ENCODE measurements at regions of chr3 and their contacts with region 1.

Region 1: DNA sequence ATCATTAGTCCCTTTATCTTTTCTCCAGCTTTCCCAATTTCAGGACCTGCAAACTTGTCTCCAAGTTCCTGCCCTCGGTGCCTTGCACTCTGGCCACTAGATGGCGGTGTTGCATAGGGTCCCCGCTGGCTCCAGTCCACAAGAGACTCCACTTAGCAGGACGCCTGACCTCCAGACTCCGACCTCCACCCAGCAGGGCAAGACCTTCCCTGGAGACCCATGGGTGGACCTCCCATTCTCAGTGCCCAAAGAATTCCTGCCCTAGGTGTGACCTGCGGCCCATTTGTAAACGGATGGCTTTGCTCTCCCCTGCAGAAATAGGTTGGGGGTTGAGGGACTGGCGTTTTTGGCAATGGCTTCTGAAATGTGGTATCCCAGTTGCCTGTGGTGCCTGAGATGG is 82.6 kb downstream of the LSM3 start:
- DNase-seq: peak; percentile 61 to 83
- H3K4me3 ChIP-seq: no peak overlapping the region
- H3K27ac ChIP-seq: no peak overlapping the region
- H3K4me1 ChIP-seq: peaks cover 44% of the 10 kb centered on the region
- H3K27me3 ChIP-seq: no peaks in the 10 kb centered on the region
- CTCF ChIP-seq: peak; percentile 99

Region 2: GRCh38 chr3:13895155-13896105 is 365.8 kb before region 1 on chr3:
- CTCF ChIA-PET with region 1: no interaction called
- POLR2A ChIA-PET with region 1: no interaction called
- intact Hi-C with region 1: loop called (anchors 1 kb)
- DNase-seq: peak; percentile 75 to 95
- H3K4me3 ChIP-seq: peak overlapping the region; percentile 96
- H3K27ac ChIP-seq: no peak overlapping the region
- H3K4me1 ChIP-seq: peaks cover 17% of the 10 kb centered on the region
- H3K27me3 ChIP-seq: no peaks in the 10 kb centered on the region
- CTCF ChIP-seq: no peak

Region 3: GRCh38 chr3:14216257-14217048 is 44.8 kb before region 1 on chr3:
- CTCF ChIA-PET with region 1: interaction called, 3 read pairs
- POLR2A ChIA-PET with region 1: interaction called, 4 read pairs
- intact Hi-C with region 1: loop called (anchors 2 kb)
- DNase-seq: peak; percentile 56 to 76
- H3K4me3 ChIP-seq: peak overlapping the region; percentile 15; the same call in 1 of the 2 replicates
- H3K27ac ChIP-seq: no peak overlapping the region
- H3K4me1 ChIP-seq: 0 out of 2 replicates have a peak, but pooled peaks cover 2% of the 10 kb centered on the region
- H3K27me3 ChIP-seq: no peaks in the 10 kb centered on the region
- CTCF ChIP-seq: peak; percentile 37; the same call in 1 of the 2 replicates

Region 4: DNA sequence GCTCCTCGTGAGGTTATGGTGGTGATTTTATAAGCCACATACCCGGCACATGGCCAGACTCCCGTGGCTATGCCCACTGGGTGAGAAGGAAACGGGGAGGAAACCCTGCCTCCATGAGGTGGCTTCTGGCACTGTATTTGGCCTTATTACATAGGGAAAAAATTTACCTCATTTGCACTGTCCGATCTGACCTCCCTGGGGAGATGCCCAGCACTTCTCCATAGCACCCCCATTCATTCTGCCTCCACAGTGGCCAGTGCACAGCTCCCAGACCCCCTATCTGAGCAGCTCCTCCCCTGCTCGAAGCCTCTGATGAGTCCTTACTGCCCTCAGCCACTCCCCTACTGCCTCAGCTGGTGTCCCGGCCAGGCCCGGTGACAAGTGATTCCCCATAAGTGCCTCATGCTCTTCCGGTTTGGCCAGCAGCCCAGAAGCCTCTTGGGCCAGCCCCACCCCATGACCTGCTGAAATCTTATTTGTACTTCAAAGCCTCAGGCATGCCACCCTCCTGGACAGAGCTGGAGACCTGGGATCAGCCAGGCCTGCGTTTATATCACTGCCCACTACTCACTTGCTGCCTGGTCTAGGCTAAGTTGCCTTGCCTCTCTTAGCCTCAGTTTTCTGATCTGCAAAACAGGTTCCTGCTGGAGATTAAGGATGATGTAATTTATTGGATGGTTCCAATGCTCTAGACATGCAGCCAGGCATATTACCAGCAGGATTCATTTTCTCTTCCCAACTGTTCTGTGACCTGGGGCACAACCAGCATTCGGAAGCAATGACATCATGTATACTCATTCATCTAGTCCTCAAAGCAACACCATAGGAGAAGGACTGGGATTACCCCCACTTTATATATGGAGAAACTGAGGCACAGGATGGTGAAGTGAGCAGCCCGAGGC is 110.6 kb after region 1 on chr3:
- CTCF ChIA-PET with region 1: no interaction called
- POLR2A ChIA-PET with region 1: no interaction called
- intact Hi-C with region 1: loop called (anchors 1 kb)
- DNase-seq: peak; percentile 90 to 93
- H3K4me3 ChIP-seq: no peak overlapping the region
- H3K27ac ChIP-seq: peak overlapping the region; percentile 62
- H3K4me1 ChIP-seq: peaks cover 54% of the 10 kb centered on the region
- H3K27me3 ChIP-seq: no peaks in the 10 kb centered on the region
- CTCF ChIP-seq: no peak; the same call in 1 of the 2 replicates

Region 5: DNA sequence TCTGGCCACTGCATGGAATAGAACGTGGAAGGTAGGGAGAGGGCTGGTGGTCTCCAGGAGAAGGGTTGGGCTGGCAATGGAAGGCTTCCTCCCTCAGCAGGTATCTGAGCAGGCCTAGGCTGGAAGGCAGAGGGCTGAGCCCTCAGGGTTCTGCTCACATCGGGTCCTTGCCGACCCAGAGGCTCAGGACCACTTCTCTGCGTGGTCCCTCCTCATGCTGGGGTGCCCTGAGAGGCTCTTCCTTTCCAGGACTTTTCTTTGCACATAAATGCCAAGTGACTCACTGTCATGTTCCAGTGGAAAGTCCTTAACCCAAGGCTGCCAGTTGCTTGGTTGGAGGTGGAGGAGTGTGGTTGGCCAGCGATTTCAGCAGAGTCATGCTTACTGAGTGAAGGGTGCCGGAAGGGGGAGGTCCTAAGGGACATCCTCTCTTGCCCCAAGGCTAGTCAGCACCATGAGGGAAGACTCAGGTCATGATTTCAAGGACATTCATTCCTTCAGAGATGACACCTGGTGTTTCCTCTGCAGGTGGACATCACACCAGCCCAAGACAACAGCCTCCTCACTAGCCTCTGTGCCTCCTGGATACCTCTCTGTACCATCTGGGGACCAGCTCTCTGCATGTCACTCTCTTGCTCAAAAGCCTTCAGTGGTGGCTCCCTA is 149.4 kb after region 1 on chr3:
- CTCF ChIA-PET with region 1: no interaction called
- POLR2A ChIA-PET with region 1: no interaction called
- intact Hi-C with region 1: loop called (anchors 1 kb)
- DNase-seq: peak; percentile 90 to 93
- H3K4me3 ChIP-seq: peak overlapping the region; percentile 32; the same call in 1 of the 2 replicates
- H3K27ac ChIP-seq: peak overlapping the region; percentile 99
- H3K4me1 ChIP-seq: peaks cover 99% of the 10 kb centered on the region
- H3K27me3 ChIP-seq: no peaks in the 10 kb centered on the region
- CTCF ChIP-seq: no peak

Region 6: DNA sequence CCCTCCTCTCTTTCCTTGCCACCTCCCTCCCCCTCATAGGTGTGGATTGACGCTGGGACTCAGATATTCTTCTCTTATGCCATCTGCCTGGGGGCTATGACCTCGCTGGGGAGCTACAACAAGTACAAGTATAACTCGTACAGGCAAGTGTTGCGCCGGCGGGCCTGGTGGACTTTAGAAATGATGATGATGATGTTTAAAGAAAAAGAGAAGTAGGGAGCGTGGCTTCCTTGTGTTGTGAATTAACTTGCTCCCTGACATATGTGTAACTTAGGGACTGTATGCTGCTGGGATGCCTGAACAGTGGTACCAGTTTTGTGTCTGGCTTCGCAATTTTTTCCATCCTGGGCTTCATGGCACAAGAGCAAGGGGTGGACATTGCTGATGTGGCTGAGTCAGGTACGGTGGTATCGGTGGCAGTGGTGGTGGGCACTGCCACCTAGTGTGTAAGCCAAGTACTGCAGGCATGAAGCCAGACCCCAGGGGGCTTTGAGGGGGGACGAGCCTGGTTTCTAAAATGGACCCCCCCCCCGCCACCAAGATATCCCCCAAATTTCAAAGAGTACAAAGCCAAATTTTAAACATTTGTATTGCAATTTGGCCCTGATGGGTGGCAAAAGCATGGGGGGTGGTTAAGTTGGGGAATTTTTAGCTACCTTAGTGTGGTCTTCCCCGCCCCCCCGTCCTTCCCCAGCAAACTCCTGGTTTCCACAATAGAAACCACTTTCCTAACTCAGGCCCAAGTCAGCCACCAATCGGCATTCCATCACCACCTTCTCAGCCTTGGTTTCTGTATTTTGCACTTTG is 206.8 kb after region 1 on chr3:
- CTCF ChIA-PET with region 1: interaction called, 3 read pairs
- POLR2A ChIA-PET with region 1: no interaction called
- intact Hi-C with region 1: loop called (anchors 1 kb)
- DNase-seq: no peak
- H3K4me3 ChIP-seq: no peak overlapping the region
- H3K27ac ChIP-seq: no peak overlapping the region
- H3K4me1 ChIP-seq: peaks cover 12% of the 10 kb centered on the region
- H3K27me3 ChIP-seq: no peaks in the 10 kb centered on the region
- CTCF ChIP-seq: peak; percentile 93

Region 7: DNA sequence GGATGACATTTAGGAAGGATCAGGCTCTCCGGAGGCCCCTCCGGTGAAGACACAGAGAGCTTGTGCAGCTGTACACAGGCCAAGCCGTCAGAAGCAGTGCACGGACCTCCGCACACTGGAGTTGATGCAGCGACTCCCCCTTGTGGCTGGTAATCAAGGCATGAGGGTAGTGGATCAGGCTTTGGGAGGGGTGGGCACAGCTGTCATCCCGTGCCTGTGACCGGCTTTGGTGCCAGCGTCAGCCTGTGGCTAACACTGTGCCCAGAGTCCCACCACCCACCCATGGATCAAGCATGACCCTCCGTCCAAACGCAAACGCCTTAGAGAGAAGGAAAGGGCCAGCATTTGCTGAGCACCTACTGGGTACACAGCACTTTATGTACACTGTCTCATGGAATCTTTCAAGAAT is 287.1 kb after region 1 on chr3:
- CTCF ChIA-PET with region 1: no interaction called
- POLR2A ChIA-PET with region 1: no interaction called
- intact Hi-C with region 1: loop called (anchors 1 kb)
- DNase-seq: peak in 1 of 2 experiments; percentile 48
- H3K4me3 ChIP-seq: no peak overlapping the region
- H3K27ac ChIP-seq: no peak overlapping the region
- H3K4me1 ChIP-seq: no peaks in the 10 kb centered on the region
- H3K27me3 ChIP-seq: peaks cover 44% of the 10 kb centered on the region
- CTCF ChIP-seq: peak; percentile 78